Testis (tissue), 5 donors: ENCODE measurements at regions of chr7 and their contacts with region 1.

Region 1: DNA sequence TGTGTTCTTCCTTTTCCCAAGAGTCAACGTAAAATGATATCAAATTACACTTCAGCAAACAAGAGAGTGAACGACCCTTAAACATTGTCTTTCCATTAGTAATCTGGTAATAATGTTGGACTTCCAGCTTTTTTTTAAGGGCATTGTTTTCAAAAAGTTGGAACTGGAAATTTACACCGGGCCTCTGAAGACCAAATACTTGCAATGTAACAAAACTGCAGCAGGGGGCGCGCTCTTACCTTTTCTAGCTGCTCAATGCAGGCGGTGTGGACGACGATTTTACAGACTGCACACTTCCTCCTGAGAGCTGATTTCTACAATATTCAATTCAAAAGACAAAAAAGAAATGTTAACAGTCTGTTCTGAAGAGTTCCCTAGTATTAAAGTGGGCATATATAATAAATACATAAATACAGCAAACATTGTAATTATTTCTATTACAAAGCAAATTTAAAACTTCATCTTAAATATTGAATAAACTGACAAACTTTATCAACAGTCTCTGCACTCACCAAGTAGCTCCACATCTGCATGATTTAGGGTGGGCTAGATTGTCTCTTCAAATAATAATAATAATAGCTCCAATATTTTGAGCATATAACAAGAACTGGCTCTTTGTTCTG is 190.4 kb downstream of the DGKI start:
- DNase-seq: peak; percentile 93
- H3K4me3 ChIP-seq: no peak overlapping the region
- H3K27ac ChIP-seq: no peak overlapping the region
- H3K4me1 ChIP-seq: no peaks in the 10 kb centered on the region
- H3K27me3 ChIP-seq: no peaks in the 10 kb centered on the region
- CTCF ChIP-seq: peak; percentile 66 to 83 (median 81)
- POLR2A ChIP-seq: no peak

Region 2: DNA sequence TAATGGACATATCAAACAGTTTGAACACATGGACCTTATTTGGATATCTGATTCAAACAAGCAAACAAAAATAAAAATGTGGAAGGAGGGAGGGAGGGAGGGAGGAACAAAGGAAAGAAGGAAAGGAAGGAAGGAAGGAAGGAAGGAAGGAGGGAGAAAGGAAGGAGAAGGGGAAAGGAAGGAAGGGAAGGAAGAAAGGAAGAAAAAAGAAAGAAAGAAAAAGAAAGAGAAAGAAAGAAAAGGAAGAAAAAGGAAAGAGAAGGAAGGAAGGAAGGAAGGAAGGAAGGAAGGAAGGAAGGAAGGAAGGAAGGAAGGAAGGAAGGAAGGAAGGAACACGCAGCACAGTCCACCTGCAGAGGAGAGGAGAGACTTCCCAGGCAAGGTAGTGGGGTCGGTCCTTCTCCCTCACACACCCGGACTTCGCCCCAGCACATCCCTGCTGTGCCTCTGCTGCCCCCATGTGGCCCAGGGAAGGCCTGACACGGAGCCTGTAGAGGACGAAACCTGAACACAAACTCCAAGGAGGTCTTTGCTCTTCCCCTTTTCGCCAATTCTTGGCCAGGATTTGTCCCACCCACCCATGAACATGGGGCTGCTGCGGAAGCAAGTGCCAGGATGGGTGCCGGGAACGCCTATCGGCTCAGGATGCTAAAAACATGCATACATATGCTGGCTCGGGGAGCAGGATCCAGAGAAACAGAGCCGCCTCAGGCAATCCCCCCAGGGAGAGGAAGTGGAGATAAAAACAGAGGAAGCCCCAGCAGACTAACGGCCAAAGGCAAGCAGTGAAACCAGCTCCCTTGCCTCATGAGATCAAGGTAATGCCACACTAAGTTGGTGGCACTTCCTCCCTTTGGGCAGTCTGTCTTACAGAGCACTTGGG is 242.7 kb after region 1 on chr7:
- intact Hi-C with region 1: loop called (anchors 10 kb)
- DNase-seq: peak; percentile 89
- H3K4me3 ChIP-seq: no peak overlapping the region
- H3K27ac ChIP-seq: peak overlapping the region in 1 of 2 donors; percentile 50
- H3K4me1 ChIP-seq: peaks cover 6% of the 10 kb centered on the region
- H3K27me3 ChIP-seq: no peaks in the 10 kb centered on the region
- CTCF ChIP-seq: peak; percentile 64 to 83 (median 79)
- POLR2A ChIP-seq: no peak

Region 3: DNA sequence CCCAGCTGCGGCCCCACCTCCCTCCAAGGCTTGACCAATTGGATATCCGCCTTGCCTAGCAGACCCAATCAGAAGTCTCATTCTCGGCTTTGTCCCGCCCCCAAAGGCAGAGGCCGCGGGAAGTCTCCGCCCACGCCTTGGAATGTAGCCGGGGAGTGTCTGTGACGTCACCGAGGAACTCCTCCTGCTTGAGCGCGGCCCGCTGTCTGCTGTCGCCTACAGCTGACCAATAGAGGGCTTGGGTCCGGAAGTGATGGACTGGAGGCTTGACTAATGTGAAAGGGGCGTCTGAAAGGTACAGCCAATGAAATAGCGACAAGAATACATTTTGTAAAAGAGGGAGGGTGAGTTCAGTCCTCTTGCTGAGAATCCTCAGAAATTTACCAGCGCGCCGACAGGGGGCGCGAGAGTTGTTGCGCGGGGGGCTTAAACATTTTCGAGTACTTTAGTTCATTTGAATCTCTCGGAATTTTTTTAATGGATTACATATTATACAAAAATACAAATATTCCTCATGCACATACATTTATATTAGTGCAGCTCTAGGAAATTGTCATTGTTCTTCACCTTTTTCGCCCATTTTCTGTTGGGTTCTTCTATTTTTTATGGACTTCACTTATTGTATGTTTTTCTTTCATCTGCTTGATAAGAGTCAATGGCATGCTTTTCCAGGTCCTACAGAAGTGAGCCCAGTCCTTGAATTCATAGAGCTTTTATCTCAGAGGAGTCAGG is 345.9 kb after region 1 on chr7:
- intact Hi-C with region 1: loop called (anchors 10 kb)
- DNase-seq: peak; percentile 99
- H3K4me3 ChIP-seq: peak overlapping the region; percentile 82 to 96
- H3K27ac ChIP-seq: peak overlapping the region; percentile 94
- H3K4me1 ChIP-seq: peaks cover 12% of the 10 kb centered on the region
- H3K27me3 ChIP-seq: no peaks in the 10 kb centered on the region
- CTCF ChIP-seq: peak; percentile 94 to 97 (median 96)
- POLR2A ChIP-seq: no peak